ENCODE measurements at regions of chr1 and their contacts with region 1.

Region 1: DNA sequence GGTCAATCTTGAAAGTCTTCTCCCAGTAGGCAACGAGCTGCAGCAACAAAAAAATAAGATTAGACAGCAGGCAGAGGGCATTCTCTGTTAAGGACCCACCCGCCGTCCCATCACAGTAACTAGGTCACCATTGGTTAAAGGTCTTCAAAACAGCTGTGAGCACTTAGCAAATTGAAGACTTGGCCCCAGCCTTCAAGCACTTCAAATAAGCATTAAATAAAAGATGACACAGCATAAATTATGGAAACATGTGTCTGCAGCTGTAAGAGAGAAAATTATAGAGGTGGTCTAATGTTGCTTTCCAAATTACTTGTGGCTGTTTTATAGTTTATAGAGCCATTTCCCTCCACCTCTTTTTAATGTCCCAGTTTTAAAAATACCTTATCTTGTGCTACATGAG is 61.2 kb downstream of the VANGL1 start:
- DNase-seq: no peak
- H3K4me3 ChIP-seq: no peak overlapping the region
- H3K27ac ChIP-seq: no peak overlapping the region
- H3K4me1 ChIP-seq: peaks cover 0 to 6% (median 2%) of the 10 kb centered on the region in 4 donors
- H3K27me3 ChIP-seq: no peaks in the 10 kb centered on the region
- CTCF ChIP-seq: no peak

Region 2: GRCh38 chr1:114723915-114724314 is 979.0 kb before region 1 on chr1:
- intact Hi-C with region 1: loop called (anchors 5 kb)
- DNase-seq: no peak
- H3K4me3 ChIP-seq: no peak overlapping the region
- H3K27ac ChIP-seq: no peak overlapping the region
- H3K4me1 ChIP-seq: peaks cover 0 to 12% (median 0%) of the 10 kb centered on the region in 4 donors
- H3K27me3 ChIP-seq: no peaks in the 10 kb centered on the region
- CTCF ChIP-seq: no peak

Region 3: DNA sequence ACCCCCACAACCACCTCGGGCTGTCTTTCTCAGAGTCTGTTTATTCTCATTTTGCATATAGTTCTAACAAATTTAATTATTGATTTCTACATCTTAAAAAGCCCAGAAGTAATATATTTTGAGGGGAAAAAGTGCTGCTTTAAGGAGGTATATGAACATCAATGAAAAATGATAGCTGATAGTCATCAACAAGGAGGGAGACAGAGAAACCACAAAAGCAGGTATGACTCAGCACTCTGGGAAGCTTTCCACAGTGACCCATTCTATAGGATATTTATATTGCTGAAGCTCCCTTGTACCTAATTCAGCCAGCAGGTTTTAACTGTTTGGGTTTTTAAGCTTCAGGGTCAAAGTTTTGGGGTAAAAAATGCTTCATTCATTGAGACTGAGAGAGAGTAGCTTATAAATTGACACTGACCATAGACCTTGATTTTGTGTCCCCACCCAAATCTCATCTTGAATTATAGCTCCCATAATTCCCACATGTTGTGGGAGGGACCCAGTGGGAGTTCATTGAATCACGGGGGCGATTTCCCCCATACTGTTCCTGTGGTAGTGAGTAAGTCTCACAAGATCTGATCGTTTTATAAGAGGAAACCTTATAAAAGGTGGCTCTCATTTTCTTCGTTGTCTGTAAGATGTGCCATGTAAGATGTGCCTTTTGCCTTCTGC is 33.8 kb before region 1 on chr1:
- intact Hi-C with region 1: no loop called
- DNase-seq: no peak
- H3K4me3 ChIP-seq: no peak overlapping the region
- H3K27ac ChIP-seq: no peak overlapping the region
- H3K4me1 ChIP-seq: peaks cover 0 to 16% (median 11%) of the 10 kb centered on the region in 4 donors
- H3K27me3 ChIP-seq: no peaks in the 10 kb centered on the region
- CTCF ChIP-seq: no peak